ENCODE measurements at regions of chr7 and their contacts with region 1.

Region 1: DNA sequence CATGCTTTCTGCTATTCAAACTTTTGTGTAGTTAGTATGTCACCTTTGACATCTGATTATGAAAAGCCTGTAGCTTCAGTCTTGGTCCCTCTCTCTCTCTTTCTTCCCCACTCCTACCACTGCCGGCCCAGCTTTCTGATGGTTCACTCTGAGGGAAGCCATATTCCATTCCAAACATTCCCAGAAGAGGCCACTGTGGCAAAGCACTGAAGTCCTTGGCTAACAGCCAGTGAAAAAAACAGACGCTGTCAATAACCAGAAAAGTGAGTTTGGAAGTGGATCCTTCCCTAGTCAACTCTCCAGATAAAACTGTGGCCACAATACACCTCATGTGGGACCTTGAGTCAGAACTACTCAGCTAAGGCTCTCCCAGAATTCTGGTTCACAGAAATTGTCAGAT is 950.7 kb upstream of the PHF14 start:
- DNase-seq: no peak

Region 2: GRCh38 chr7:9978106-9979064 is 44.6 kb before region 1 on chr7:
- intact Hi-C with region 1: no loop called
- DNase-seq: no peak

Region 3: GRCh38 chr7:10412422-10413019 is 389.6 kb after region 1 on chr7:
- intact Hi-C with region 1: loop called (anchors 2 kb)
- DNase-seq: no peak

Region 4: GRCh38 chr7:10596827-10597226 is 573.9 kb after region 1 on chr7:
- intact Hi-C with region 1: no loop called
- DNase-seq: no peak

Measured in cardiac septum (tissue), 1 donor.